ENCODE measurements at regions of chr4 and their contacts with region 1.

Region 1: GRCh38 chr4:111991797-111992196 is 153.5 kb upstream of the FAM241A start:
- DNase-seq: peak; percentile 13
- ATAC-seq: peak; percentile 69
- H3K4me3 ChIP-seq: no peak overlapping the region
- H3K27ac ChIP-seq: no peak overlapping the region
- H3K4me1 ChIP-seq: peaks cover 12% of the 10 kb centered on the region
- H3K27me3 ChIP-seq: peaks cover 0 to 2% of the 10 kb centered on the region in 2 experiments; a peak in 1 of 4 replicates
- CTCF ChIP-seq: no peak
- EP300 ChIP-seq: no peak
- POLR2A ChIP-seq: no peak
- RAD21 ChIP-seq: no peak

Region 2: DNA sequence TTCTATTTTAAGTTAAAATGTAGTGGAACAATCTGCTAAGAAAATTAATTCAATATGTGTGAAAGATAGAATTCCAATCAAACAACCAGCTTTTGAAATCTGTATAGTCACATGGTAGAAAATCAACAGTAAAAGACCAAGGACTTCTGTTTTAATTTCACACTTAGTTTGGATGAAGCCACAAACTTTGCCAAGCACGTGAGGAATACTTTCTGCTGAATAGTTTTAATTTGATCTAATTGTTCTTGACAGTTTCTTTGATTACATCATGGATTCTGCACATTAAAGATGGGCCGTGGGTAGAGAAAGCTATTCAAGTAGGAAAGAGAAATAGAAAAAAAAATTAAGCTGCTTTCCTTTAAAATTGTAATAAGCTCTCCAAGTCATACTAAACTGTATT is 15.6 kb after region 1 on chr4:
- CTCF ChIA-PET with region 1: interaction called, 4 read pairs
- POLR2A ChIA-PET with region 1: no interaction called
- RAD21 ChIA-PET with region 1: interaction called, 4 read pairs
- SMC1A ChIA-PET with region 1: interaction called, 13 read pairs
- in situ Hi-C with region 1: no loop called
- intact Hi-C with region 1: no loop called
- DNase-seq: no peak
- ATAC-seq: no peak
- H3K4me3 ChIP-seq: no peak overlapping the region
- H3K27ac ChIP-seq: no peak overlapping the region
- H3K4me1 ChIP-seq: no peaks in the 10 kb centered on the region
- H3K27me3 ChIP-seq: no peaks in the 10 kb centered on the region
- CTCF ChIP-seq: no peak
- EP300 ChIP-seq: no peak
- POLR2A ChIP-seq: no peak
- RAD21 ChIP-seq: no peak

Region 3: GRCh38 chr4:112560084-112560483 is 568.3 kb after region 1 on chr4:
- CTCF ChIA-PET with region 1: no interaction called
- POLR2A ChIA-PET with region 1: no interaction called
- RAD21 ChIA-PET with region 1: no interaction called
- SMC1A ChIA-PET with region 1: no interaction called
- in situ Hi-C with region 1: no loop called
- intact Hi-C with region 1: no loop called
- DNase-seq: no peak
- ATAC-seq: peak; percentile 53
- H3K4me3 ChIP-seq: no peak overlapping the region
- H3K27ac ChIP-seq: no peak overlapping the region
- H3K4me1 ChIP-seq: peaks cover 6% of the 10 kb centered on the region; the same call in 1 of the 2 replicates
- H3K27me3 ChIP-seq: no peaks in the 10 kb centered on the region
- CTCF ChIP-seq: no peak
- EP300 ChIP-seq: no peak
- POLR2A ChIP-seq: no peak
- RAD21 ChIP-seq: no peak

Measured in GM12878 (cell line).